Activated CD4-positive, alpha-beta memory T cell treated with anti-CD3 and anti-CD28 coated beads, Interleukin-2, amount 10 ng/mL, durations not matched to agents 7 days and 5 days (primary cell): ENCODE measurements at regions of chr4 and their contacts with region 1.

Region 1: GRCh38 chr4:118888666-118889311 is at the start of gene SYNPO2:
- DNase-seq: peak; percentile 44
- H3K4me3 Mint-ChIP-seq: peak within 1 kb of the TSS; percentile 69
- H3K27ac Mint-ChIP-seq: no peak within 1 kb of the TSS
- H3K4me1 Mint-ChIP-seq: peaks cover 21% of the 10 kb centered on the region
- H3K27me3 Mint-ChIP-seq: peaks cover 29% of the 10 kb centered on the region
- total RNA-seq, gene SYNPO2: 0.50 to 0.63 TPM

Region 2: GRCh38 chr4:118740869-118741268 is 147.9 kb before region 1 on chr4:
- CTCF ChIA-PET with region 1: interaction called, 17 read pairs
- POLR2A ChIA-PET with region 1: no interaction called
- DNase-seq: no peak
- H3K4me3 Mint-ChIP-seq: no peak overlapping the region
- H3K27ac Mint-ChIP-seq: no peak overlapping the region
- H3K4me1 Mint-ChIP-seq: no peaks in the 10 kb centered on the region
- H3K27me3 Mint-ChIP-seq: no peaks in the 10 kb centered on the region

Region 3: DNA sequence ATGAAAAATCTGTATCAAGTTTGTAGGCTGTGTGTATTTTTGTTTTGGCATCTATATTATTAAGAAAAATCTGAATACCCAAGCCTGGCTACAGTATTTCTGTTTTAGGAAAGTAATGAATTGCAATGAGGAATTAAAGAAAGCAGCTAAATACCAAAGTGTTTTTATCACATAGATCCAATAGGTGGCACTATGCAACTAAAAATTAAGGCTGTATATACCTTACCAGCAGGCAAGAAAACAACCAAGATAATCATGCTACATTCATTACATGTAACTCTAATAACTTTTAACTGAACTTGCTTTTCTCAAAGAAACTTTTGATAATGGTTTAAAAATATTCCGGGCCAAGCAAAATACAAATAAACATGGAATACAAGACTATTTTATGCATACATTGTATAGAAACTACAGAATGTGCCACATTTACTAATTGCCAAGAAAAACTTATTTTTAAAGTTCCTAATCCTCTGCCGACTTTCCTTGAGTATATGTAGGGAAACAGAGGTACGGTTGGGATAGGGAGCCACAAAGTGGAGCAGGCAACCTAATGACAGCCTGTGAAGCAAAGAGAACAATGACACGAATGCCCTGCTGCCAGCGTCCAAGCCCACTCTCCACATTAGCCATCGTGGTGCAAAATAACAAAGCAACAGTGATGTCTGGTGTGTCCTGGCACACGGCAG is 116.6 kb before region 1 on chr4:
- CTCF ChIA-PET with region 1: interaction called, 34 read pairs
- POLR2A ChIA-PET with region 1: no interaction called
- DNase-seq: no peak
- H3K4me3 Mint-ChIP-seq: no peak overlapping the region
- H3K27ac Mint-ChIP-seq: no peak overlapping the region
- H3K4me1 Mint-ChIP-seq: no peaks in the 10 kb centered on the region
- H3K27me3 Mint-ChIP-seq: no peaks in the 10 kb centered on the region

Region 4: DNA sequence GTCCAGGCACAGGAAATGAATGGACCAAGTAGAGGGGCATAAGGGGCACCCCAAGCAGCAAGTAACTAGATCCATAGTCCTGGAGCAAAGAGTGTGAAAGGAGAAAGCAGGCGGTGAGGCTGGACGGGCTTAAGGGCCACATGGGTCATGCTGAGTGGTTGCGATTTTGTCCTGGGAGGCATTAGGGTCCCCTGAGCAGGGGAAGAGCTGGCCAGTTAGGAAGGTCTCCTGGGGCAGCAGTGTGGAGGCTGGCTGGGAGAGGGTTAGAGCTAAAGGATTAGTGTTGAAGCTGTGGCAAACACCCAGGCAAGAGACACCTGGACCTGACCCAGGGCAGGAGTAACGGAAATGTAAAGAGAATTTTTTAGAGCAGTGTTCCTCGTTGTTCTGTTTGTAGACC is 273.4 kb after region 1 on chr4:
- CTCF ChIA-PET with region 1: no interaction called
- POLR2A ChIA-PET with region 1: no interaction called
- DNase-seq: no peak
- H3K4me3 Mint-ChIP-seq: no peak overlapping the region
- H3K27ac Mint-ChIP-seq: no peak overlapping the region
- H3K4me1 Mint-ChIP-seq: no peaks in the 10 kb centered on the region
- H3K27me3 Mint-ChIP-seq: peaks cover 6% of the 10 kb centered on the region